ENCODE measurements at regions of chr20 and their contacts with region 1.

Region 1: GRCh38 chr20:22312744-22313346 is 271.5 kb downstream of the FOXA2 start:
- DNase-seq: peak; percentile 23
- ATAC-seq: no peak
- H3K4me3 ChIP-seq: no peak overlapping the region
- H3K27ac ChIP-seq: no peak overlapping the region
- H3K4me1 ChIP-seq: no peaks in the 10 kb centered on the region
- H3K27me3 ChIP-seq: peaks cover 28% of the 10 kb centered on the region
- CTCF ChIP-seq: peak; percentile 21 to 73 (median 64); a peak in 5 of 6 replicates
- POLR2A ChIP-seq: no peak
- RAD21 ChIP-seq: peak; percentile 54

Region 2: GRCh38 chr20:21795955-21796458 is 516.8 kb before region 1 on chr20:
- CTCF ChIA-PET with region 1: no interaction called
- POLR2A ChIA-PET with region 1: no interaction called
- RAD21 ChIA-PET with region 1: no interaction called
- intact Hi-C with region 1: loop called (anchors 5 kb)
- DNase-seq: no peak
- ATAC-seq: no peak
- H3K4me3 ChIP-seq: no peak overlapping the region
- H3K27ac ChIP-seq: no peak overlapping the region
- H3K4me1 ChIP-seq: no peaks in the 10 kb centered on the region
- H3K27me3 ChIP-seq: no peaks in the 10 kb centered on the region
- CTCF ChIP-seq: peak in 2 of 3 experiments; percentile 31 to 45; a peak in 3 of 6 replicates
- POLR2A ChIP-seq: no peak
- RAD21 ChIP-seq: no peak